CD14-positive monocyte (primary cell): ENCODE measurements at regions of chr14 and their contacts with region 1.

Region 1: GRCh38 chr14:50023671-50024490 is 92.5 kb downstream of the VCPKMT start:
- DNase-seq: no peak
- H3K4me3 ChIP-seq: no peak overlapping the region
- H3K4me3 Mint-ChIP-seq: no peak overlapping the region
- H3K27ac ChIP-seq: no peak overlapping the region
- H3K27ac Mint-ChIP-seq: peak overlapping the region in 1 of 7 donors; percentile 14
- H3K4me1 ChIP-seq: peaks cover 11 to 17% of the 10 kb centered on the region in 2 donors
- H3K4me1 Mint-ChIP-seq: peaks cover 18% of the 10 kb centered on the region
- H3K27me3 ChIP-seq: no peaks in the 10 kb centered on the region
- H3K27me3 Mint-ChIP-seq: peaks cover 0 to 1% (median 0%) of the 10 kb centered on the region in 3 donors
- CTCF ChIP-seq: no peak

Region 2: DNA sequence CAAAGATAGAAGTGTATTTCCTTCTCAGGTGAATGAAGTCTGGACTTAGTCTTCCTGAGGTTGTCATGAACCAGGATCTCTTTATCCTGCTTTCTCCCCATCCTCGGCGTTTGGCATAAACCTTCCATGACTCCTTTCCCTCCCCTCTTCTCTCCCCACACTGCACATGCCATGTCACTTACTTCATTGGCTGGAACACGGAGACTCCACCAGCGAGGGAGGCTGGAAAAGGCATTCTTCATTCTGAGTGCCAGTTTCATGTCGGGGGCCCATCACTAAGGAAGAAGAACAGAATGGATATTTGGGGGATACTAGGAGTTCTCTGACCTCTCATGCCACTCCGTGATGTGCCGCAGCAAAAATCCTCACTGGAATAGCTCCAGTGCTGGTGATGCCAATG is 13.1 kb before region 1 on chr14:
- intact Hi-C with region 1: loop called in 1 of 2 experiments (anchors 2 kb)
- DNase-seq: no peak
- H3K4me3 ChIP-seq: no peak overlapping the region
- H3K4me3 Mint-ChIP-seq: no peak overlapping the region
- H3K27ac ChIP-seq: no peak overlapping the region
- H3K27ac Mint-ChIP-seq: no peak overlapping the region
- H3K4me1 ChIP-seq: peaks cover 11 to 17% of the 10 kb centered on the region in 2 donors
- H3K4me1 Mint-ChIP-seq: peaks cover 22% of the 10 kb centered on the region
- H3K27me3 ChIP-seq: no peaks in the 10 kb centered on the region
- H3K27me3 Mint-ChIP-seq: peaks cover 0 to 3% (median 1%) of the 10 kb centered on the region in 3 donors
- CTCF ChIP-seq: no peak